ENCODE measurements at regions of chr3 and their contacts with region 1.

Region 1: GRCh38 chr3:27712136-27713077 is 9.7 kb downstream of the EOMES start:
- DNase-seq: peak; percentile 84
- ATAC-seq: peak; percentile 82
- H3K4me3 ChIP-seq: peak overlapping the region; percentile 78
- H3K27ac ChIP-seq: no peak overlapping the region
- H3K4me1 ChIP-seq: peaks cover 19% of the 10 kb centered on the region
- H3K27me3 ChIP-seq: peaks cover 12% of the 10 kb centered on the region; the same call in 1 of the 2 replicates
- CTCF ChIP-seq: peak; percentile 86

Region 2: GRCh38 chr3:27345492-27345891 is 366.9 kb before region 1 on chr3:
- CTCF ChIA-PET with region 1: no interaction called
- POLR2A ChIA-PET with region 1: interaction called, 24 read pairs
- intact Hi-C with region 1: no loop called
- DNase-seq: peak; percentile 48
- ATAC-seq: peak; percentile 73
- H3K4me3 ChIP-seq: no peak overlapping the region
- H3K27ac ChIP-seq: no peak overlapping the region
- H3K4me1 ChIP-seq: peaks cover 19% of the 10 kb centered on the region
- H3K27me3 ChIP-seq: no peaks in the 10 kb centered on the region
- CTCF ChIP-seq: no peak

Region 3: DNA sequence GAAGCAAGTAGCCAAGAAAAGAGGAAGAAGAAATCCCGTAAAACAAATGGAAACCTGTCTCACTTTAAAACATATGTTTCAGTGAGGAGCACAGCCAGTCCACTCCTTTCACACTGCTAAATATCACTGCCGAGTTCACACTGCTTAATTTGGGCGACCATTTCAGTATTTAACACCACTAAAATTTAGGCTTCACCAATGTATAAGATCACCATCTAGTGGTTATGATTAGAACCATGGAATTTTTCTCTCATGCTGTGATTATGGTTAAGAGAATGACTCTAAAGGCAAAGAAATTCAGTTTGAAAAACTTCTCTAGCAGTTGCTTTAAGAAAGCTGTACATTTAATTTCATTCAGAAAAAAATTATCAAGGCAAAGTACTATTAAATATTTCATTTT is 244.9 kb before region 1 on chr3:
- CTCF ChIA-PET with region 1: interaction called, 17 read pairs
- POLR2A ChIA-PET with region 1: no interaction called
- intact Hi-C with region 1: no loop called
- DNase-seq: peak; percentile 72
- ATAC-seq: peak; percentile 81
- H3K4me3 ChIP-seq: no peak overlapping the region
- H3K27ac ChIP-seq: no peak overlapping the region
- H3K4me1 ChIP-seq: 0 out of 2 replicates have a peak, but pooled peaks cover 10% of the 10 kb centered on the region
- H3K27me3 ChIP-seq: no peaks in the 10 kb centered on the region
- CTCF ChIP-seq: peak; percentile 79

Region 4: GRCh38 chr3:27779176-27779575 is 66.8 kb after region 1 on chr3:
- CTCF ChIA-PET with region 1: no interaction called
- POLR2A ChIA-PET with region 1: no interaction called
- intact Hi-C with region 1: no loop called
- DNase-seq: no peak
- ATAC-seq: no peak
- H3K4me3 ChIP-seq: no peak overlapping the region
- H3K27ac ChIP-seq: no peak overlapping the region
- H3K4me1 ChIP-seq: no peaks in the 10 kb centered on the region
- H3K27me3 ChIP-seq: peaks cover 23% of the 10 kb centered on the region; the same call in 1 of the 2 replicates
- CTCF ChIP-seq: no peak

Region 5: GRCh38 chr3:27827041-27827440 is 114.6 kb after region 1 on chr3:
- CTCF ChIA-PET with region 1: interaction called, 11 read pairs
- POLR2A ChIA-PET with region 1: no interaction called
- intact Hi-C with region 1: no loop called
- DNase-seq: no peak
- ATAC-seq: no peak
- H3K4me3 ChIP-seq: no peak overlapping the region
- H3K27ac ChIP-seq: no peak overlapping the region
- H3K4me1 ChIP-seq: no peaks in the 10 kb centered on the region
- H3K27me3 ChIP-seq: peaks cover 51% of the 10 kb centered on the region
- CTCF ChIP-seq: no peak

Region 6: DNA sequence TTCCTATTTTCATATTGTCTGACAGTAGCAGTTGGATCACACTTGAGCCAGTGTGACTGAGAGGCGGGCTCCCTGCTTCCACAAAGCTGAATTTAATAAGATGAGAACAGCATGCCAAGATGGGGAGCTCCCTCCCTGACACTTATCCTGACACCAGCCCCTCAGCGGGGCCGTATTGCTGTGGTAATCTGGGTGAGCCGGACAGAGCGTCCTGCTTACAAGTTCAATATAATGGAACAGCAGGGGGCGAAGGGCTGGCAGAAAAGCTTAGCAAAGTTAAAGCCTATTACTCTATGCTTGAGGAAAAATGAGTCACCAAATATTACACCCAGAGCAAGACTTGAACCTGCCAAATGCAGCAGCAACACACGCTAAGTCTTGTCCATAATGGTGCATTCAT is 365.2 kb after region 1 on chr3:
- CTCF ChIA-PET with region 1: no interaction called
- POLR2A ChIA-PET with region 1: no interaction called
- intact Hi-C with region 1: no loop called
- DNase-seq: peak; percentile 24
- ATAC-seq: no peak; the same call in 1 of the 2 replicates
- H3K4me3 ChIP-seq: no peak overlapping the region
- H3K27ac ChIP-seq: no peak overlapping the region
- H3K4me1 ChIP-seq: no peaks in the 10 kb centered on the region
- H3K27me3 ChIP-seq: no peaks in the 10 kb centered on the region
- CTCF ChIP-seq: no peak

Region 7: DNA sequence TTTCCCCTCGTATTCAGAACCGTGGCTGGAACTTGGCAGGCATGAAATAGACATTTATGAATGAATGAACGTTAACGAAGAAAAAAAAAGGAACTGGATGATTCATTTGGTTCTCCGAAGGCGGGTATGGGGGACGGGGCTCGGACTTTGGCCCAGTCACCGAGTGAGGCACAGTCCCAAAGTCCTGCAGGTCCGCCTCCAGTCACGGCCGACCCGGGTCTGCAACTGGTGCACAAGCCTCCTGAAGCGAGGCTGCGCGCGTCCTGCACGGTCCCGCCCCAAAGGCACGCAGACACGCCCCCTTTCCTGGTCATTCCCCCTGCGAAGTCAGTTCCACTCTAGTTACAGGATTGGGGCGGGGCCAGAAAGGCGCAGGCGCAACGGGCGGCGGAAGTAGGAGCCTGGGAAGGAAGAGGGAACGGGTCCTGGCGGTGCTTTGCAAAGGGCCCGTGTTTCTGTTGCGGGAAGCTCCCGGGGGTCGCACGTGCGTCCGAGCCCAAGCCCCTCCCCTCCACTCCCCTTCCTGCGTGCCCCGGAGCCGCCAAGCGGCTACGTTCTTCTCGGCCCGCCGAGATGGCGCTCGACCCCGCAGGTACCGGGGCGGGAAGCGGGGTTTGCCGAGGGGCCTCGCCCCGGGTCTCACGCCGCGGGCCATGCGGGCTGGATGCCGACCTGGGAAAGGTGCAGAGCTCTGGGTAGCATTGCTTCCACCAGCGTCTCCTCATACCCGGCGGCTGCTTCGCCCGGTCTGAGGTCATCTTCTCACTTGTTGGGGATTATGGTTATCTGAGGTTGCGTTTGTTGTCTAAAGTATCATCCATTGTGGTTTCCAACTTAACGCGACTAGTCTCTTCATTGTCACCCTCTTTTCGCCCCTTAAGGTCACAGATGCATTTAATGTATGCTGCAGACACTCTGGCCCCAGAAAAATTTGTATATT is 529.1 kb after region 1 on chr3 and contains the start of gene CMC1:
- CTCF ChIA-PET with region 1: no interaction called
- POLR2A ChIA-PET with region 1: no interaction called
- intact Hi-C with region 1: loop called (anchors 5 kb)
- DNase-seq: peak; percentile 98
- ATAC-seq: peak; percentile 99
- H3K4me3 ChIP-seq: peak within 1 kb of the TSS; percentile 84
- H3K27ac ChIP-seq: peak within 1 kb of the TSS; percentile 59
- H3K4me1 ChIP-seq: peaks cover 22% of the 10 kb centered on the region
- H3K27me3 ChIP-seq: no peaks in the 10 kb centered on the region
- CTCF ChIP-seq: no peak
- total RNA-seq, gene CMC1: 11.3 and 16.7 TPM in 2 replicates

Region 8: GRCh38 chr3:28328188-28329151 is 616.1 kb after region 1 on chr3:
- CTCF ChIA-PET with region 1: interaction called, 4 read pairs
- POLR2A ChIA-PET with region 1: no interaction called
- intact Hi-C with region 1: loop called (anchors 1 kb)
- DNase-seq: peak; percentile 75
- ATAC-seq: peak; percentile 33; the same call in 1 of the 2 replicates
- H3K4me3 ChIP-seq: no peak overlapping the region
- H3K27ac ChIP-seq: no peak overlapping the region
- H3K4me1 ChIP-seq: no peaks in the 10 kb centered on the region
- H3K27me3 ChIP-seq: no peaks in the 10 kb centered on the region
- CTCF ChIP-seq: peak; percentile 82